ENCODE measurements at regions of chr17 and their contacts with region 1.

Region 1: GRCh38 chr17:44466339-44466738 is 36.9 kb downstream of the GPATCH8 start:
- DNase-seq: no peak

Region 2: GRCh38 chr17:43609613-43610385 is 856.5 kb before region 1 on chr17:
- intact Hi-C with region 1: loop called in 1 of 2 experiments (anchors 5 kb)
- DNase-seq: no peak